ENCODE measurements at regions of chr10 and their contacts with region 1.

Region 1: DNA sequence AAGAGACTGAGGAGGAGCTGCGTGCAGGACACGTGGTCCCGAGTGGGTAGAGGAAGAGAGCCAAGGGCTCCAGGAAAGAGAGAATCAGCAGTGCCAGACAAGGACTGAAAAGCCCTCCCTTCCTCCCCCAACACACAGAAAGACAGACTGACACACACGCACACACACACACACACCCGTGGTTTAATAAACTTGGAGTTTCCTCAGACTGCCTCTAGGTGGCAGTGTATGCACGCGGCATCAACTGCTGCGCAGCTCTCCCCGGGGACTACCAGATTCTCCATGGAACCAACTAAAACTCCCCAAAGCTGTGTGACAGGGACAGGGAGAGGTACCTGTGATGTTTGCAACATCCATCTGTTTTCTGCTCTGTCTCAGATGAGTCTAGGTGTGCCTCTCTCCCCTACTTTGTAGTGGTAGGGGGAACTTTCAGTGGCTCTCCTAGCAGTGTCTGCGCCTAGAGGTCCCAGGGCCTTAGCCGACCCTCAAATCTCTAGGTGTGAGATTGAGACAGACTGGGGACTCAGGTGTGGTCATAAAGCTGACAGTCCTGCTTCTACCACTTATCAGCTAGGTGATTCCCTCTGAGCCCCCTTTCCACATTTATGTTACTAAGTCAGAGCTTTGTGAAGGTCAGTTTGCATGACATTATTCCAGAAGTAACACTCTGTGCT is 9.3 kb upstream of the TSPAN14 start:
- DNase-seq: peak; percentile 82
- H3K4me3 Mint-ChIP-seq: no peak overlapping the region
- H3K27ac Mint-ChIP-seq: peak overlapping the region; percentile 61
- H3K4me1 Mint-ChIP-seq: peaks cover 59% of the 10 kb centered on the region
- H3K27me3 Mint-ChIP-seq: no peaks in the 10 kb centered on the region

Region 2: GRCh38 chr10:80408242-80409101 is 36.3 kb before region 1 on chr10 and contains the start of gene PRXL2A:
- CTCF ChIA-PET with region 1: interaction called, 5 read pairs
- intact Hi-C with region 1: loop called (anchors 1 kb)
- DNase-seq: peak; percentile 85
- H3K4me3 Mint-ChIP-seq: peak within 1 kb of the TSS; percentile 89
- H3K27ac Mint-ChIP-seq: peak within 1 kb of the TSS; percentile 60
- H3K4me1 Mint-ChIP-seq: peaks cover 30% of the 10 kb centered on the region
- H3K27me3 Mint-ChIP-seq: no peaks in the 10 kb centered on the region
- total RNA-seq, gene PRXL2A: 17.6 to 17.7 TPM

Region 3: GRCh38 chr10:80487791-80488538 is 43.2 kb after region 1 on chr10:
- CTCF ChIA-PET with region 1: interaction called, 18 read pairs
- intact Hi-C with region 1: no loop called
- DNase-seq: peak; percentile 73
- H3K4me3 Mint-ChIP-seq: peak overlapping the region; percentile 32
- H3K27ac Mint-ChIP-seq: peak overlapping the region; percentile 86
- H3K4me1 Mint-ChIP-seq: peaks cover 98% of the 10 kb centered on the region
- H3K27me3 Mint-ChIP-seq: no peaks in the 10 kb centered on the region

Region 4: GRCh38 chr10:80530251-80530650 is 85.5 kb after region 1 on chr10:
- CTCF ChIA-PET with region 1: interaction called, 21 read pairs
- intact Hi-C with region 1: loop called (anchors 1 kb)
- DNase-seq: peak; percentile 84
- H3K4me3 Mint-ChIP-seq: peak overlapping the region; percentile 32
- H3K27ac Mint-ChIP-seq: peak overlapping the region; percentile 72
- H3K4me1 Mint-ChIP-seq: peaks cover 73% of the 10 kb centered on the region
- H3K27me3 Mint-ChIP-seq: no peaks in the 10 kb centered on the region

Region 5: DNA sequence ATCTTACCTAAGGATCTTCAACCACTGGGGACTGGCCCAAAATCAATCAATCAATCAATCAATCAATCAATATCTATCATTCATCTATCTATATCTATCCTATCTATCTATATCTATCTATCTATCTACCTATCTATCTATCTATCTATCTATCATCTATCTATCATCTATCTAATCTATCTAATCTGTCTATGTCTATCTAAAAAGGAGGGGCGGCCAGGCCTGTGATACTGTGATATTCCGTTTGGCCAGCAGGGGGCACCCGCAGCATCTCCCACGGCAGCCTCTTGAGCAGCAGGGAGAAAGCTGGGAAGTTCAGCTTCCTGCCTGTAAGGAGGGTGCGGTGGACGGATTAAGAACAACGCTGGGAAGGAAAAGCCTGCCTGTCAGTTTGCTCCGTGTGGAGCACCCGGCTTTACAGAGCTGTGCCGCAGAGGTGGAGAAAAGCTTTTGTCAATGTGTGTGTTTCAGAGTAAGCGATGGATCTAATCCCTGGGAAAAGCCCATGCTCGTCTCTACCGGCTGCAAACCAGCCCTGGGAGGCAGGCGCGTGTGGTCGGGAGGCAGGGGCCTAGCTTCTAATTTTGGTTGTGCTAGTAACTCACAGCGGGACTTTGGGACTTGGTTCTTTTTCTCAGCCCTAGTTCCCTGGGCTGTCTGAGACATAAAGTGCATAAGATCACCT is 217.9 kb after region 1 on chr10:
- CTCF ChIA-PET with region 1: interaction called, 32 read pairs
- intact Hi-C with region 1: loop called (anchors 1 kb)
- DNase-seq: peak; percentile 83
- H3K4me3 Mint-ChIP-seq: peak overlapping the region; percentile 52
- H3K27ac Mint-ChIP-seq: no peak overlapping the region
- H3K4me1 Mint-ChIP-seq: peaks cover 4% of the 10 kb centered on the region
- H3K27me3 Mint-ChIP-seq: peaks cover 9% of the 10 kb centered on the region

Region 6: DNA sequence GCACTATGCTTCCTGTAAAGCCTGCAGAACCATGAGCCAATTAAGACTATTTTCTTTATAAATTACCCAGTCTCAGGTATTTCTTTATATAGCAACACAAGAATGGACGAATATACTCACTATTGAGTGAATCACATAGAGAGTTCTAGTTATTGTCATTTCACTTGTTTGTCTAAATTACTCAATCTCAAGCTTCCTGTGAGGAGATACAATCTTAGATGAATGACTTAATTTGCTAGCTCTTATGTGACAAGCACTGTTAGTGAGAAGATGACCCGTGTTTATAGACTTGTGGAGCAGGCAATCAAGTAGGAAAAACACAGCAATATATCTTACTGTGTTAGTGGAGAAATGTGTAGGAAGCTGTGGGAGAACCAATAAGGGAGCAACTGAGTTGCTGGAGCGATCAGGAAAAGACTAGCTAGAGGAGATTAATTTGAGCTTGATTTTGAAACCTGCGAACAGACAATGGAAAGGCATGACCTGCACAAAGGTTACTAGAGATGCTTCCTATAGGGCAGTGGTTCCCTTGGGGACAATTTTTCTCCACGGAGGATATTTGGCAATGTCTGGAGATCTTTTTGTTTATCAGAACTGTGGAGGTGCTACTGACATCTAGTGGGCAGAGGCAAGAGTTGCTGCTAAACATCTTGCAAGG is 574.1 kb after region 1 on chr10:
- CTCF ChIA-PET with region 1: interaction called, 6 read pairs
- intact Hi-C with region 1: loop called (anchors 5 kb)
- DNase-seq: peak; percentile 45
- H3K4me3 Mint-ChIP-seq: no peak overlapping the region
- H3K27ac Mint-ChIP-seq: no peak overlapping the region
- H3K4me1 Mint-ChIP-seq: no peaks in the 10 kb centered on the region
- H3K27me3 Mint-ChIP-seq: peaks cover 2% of the 10 kb centered on the region

Measured in activated naive CD4-positive, alpha-beta T cell treated with anti-CD3 and anti-CD28 coated beads for 36 hours (primary cell).